Aorta (tissue), 5 donors: ENCODE measurements at regions of chr18 and their contacts with region 1.

Region 1: GRCh38 chr18:79458131-79458838 is 62.6 kb downstream of the NFATC1 start:
- DNase-seq: peak; percentile 80 to 92
- ATAC-seq: peak; percentile 81
- H3K4me3 ChIP-seq: no peak overlapping the region
- H3K27ac ChIP-seq: no peak overlapping the region
- H3K4me1 ChIP-seq: no peaks in the 10 kb centered on the region
- H3K27me3 ChIP-seq: no peaks in the 10 kb centered on the region

Region 2: GRCh38 chr18:78893278-78894035 is 564.8 kb before region 1 on chr18:
- intact Hi-C with region 1: no loop called
- DNase-seq: no peak
- ATAC-seq: no peak
- H3K4me3 ChIP-seq: no peak overlapping the region
- H3K27ac ChIP-seq: no peak overlapping the region
- H3K4me1 ChIP-seq: no peaks in the 10 kb centered on the region
- H3K27me3 ChIP-seq: no peaks in the 10 kb centered on the region

Region 3: GRCh38 chr18:79393635-79394533 is 64.4 kb before region 1 on chr18:
- intact Hi-C with region 1: loop called in 1 of 2 experiments (anchors 10 kb)
- DNase-seq: peak; percentile 95 to 97
- ATAC-seq: peak; percentile 80
- H3K4me3 ChIP-seq: peak overlapping the region; percentile 34 to 81
- H3K27ac ChIP-seq: peak overlapping the region; percentile 97 to 99
- H3K4me1 ChIP-seq: no peaks in the 10 kb centered on the region
- H3K27me3 ChIP-seq: no peaks in the 10 kb centered on the region

Region 4: GRCh38 chr18:79400091-79400590 is 58.1 kb before region 1 on chr18:
- intact Hi-C with region 1: loop called (anchors 5 to 10 kb)
- DNase-seq: peak; percentile 76 to 91
- ATAC-seq: no peak
- H3K4me3 ChIP-seq: peak overlapping the region; percentile 68 to 74
- H3K27ac ChIP-seq: no peak overlapping the region
- H3K4me1 ChIP-seq: no peaks in the 10 kb centered on the region
- H3K27me3 ChIP-seq: no peaks in the 10 kb centered on the region